CD4-positive, alpha-beta memory T cell (primary cell): ENCODE measurements at regions of chr1 and their contacts with region 1.

Region 1: DNA sequence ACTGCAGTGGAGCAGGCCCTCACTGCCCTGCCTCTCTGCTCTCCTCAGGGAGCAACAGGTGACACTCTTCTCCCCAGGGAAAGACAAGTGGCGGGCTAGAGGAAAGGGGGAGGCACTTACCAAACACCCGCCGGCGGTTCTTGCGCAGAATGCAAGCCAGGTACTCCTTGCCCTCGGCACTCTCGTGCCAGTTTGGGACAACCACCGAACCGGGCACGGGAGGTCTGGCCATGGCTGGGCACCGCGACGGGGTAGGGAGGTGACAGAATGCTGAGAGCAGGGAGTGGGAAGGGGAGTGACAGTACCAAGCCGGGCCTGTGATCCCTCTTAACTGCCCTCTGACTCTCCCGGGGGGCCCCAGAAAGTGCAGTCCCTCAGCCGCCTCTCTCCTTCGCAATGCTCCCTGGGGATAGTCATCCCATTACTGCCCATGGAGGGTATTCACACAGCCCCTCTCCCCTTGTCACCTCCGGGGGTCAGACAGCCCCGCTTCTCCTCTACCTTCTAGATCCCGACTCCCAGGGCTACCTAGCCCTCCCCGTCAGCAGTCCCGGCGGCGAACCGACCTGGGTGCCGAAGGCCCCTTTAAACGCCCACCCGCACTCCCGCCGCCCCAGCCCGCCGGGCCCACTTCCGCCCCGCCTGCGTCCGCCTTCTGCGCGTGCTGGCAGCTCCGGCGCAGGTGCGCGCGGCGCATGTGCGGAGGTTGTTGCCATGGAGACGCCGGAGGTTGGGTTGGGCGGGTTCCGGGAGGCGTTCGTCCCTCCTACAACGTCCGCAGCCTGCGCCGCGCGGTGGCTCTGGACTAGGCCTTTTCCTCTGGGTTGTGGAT is at the start of gene CPLANE2:
- DNase-seq: peak; percentile 93 to 96 (median 94)
- H3K4me3 ChIP-seq: peak within 1 kb of the TSS; percentile 68 to 72
- H3K4me3 Mint-ChIP-seq: peak within 1 kb of the TSS; percentile 83 to 97 (median 91)
- H3K27ac ChIP-seq: peak within 1 kb of the TSS; percentile 82
- H3K27ac Mint-ChIP-seq: peak within 1 kb of the TSS; percentile 94 to 99 (median 97)
- H3K4me1 ChIP-seq: peaks cover 24% of the 10 kb centered on the region
- H3K4me1 Mint-ChIP-seq: peaks cover 12 to 23% (median 18%) of the 10 kb centered on the region in 4 donors
- H3K27me3 ChIP-seq: no peaks in the 10 kb centered on the region
- H3K27me3 Mint-ChIP-seq: no peaks in the 10 kb centered on the region
- total RNA-seq, gene CPLANE2: 11.5 to 13.6 TPM

Region 2: DNA sequence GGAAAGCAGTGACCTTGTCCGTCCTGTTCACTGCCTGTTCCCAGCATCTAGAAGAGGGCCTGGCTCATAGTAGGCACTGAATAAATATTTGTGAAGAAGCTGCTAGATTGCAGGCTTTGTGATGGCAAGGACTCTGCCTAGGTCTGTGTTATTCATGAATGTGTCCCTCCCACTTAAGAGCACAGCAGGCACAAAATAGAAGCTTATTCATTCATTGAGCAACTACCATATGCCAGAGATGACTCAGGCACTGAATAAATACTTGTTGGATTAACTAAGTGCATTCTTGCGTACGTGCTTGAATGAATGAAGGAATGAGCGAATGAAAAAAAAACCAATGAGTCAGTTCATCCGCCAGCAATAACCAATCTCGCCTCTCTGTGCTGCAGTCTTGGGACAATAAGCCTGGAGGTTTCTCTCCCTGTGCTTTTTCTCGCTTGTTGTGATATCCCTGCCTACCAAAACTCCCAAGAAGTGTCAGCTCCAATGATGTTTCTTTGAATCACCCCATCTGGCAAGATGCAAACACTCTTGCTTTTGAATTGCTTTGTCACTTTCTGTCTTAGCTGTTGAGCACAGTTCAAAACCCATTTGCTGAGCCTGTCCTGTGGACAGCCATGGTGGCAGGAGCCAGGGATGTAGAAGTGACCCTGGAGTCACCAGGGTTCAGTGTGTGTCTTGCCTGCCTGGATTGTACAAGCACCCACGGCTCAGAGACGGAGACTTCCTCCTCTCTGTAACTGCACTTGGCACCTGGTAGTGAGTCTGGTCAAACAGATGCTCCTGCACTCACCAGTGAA is 1494.3 kb before region 1 on chr1:
- CTCF ChIA-PET with region 1: no interaction called
- POLR2A ChIA-PET with region 1: no interaction called
- intact Hi-C with region 1: no loop called
- DNase-seq: no peak
- H3K4me3 ChIP-seq: no peak overlapping the region
- H3K4me3 Mint-ChIP-seq: no peak overlapping the region
- H3K27ac ChIP-seq: no peak overlapping the region
- H3K27ac Mint-ChIP-seq: no peak overlapping the region
- H3K4me1 ChIP-seq: no peaks in the 10 kb centered on the region
- H3K4me1 Mint-ChIP-seq: no peaks in the 10 kb centered on the region
- H3K27me3 ChIP-seq: no peaks in the 10 kb centered on the region
- H3K27me3 Mint-ChIP-seq: peaks cover 14 to 27% of the 10 kb centered on the region in 2 donors

Region 3: GRCh38 chr1:16078925-16079656 is 157.6 kb before region 1 on chr1:
- CTCF ChIA-PET with region 1: interaction called, 4 read pairs
- POLR2A ChIA-PET with region 1: interaction called, 3 read pairs
- intact Hi-C with region 1: loop called (anchors 2 kb)
- DNase-seq: peak; percentile 73 to 76 (median 75)
- H3K4me3 ChIP-seq: peak overlapping the region in 1 of 2 donors; percentile 7
- H3K4me3 Mint-ChIP-seq: peak overlapping the region; percentile 76 to 92 (median 84)
- H3K27ac ChIP-seq: no peak overlapping the region
- H3K27ac Mint-ChIP-seq: peak overlapping the region in 6 of 7 donors; percentile 31 to 91 (median 58)
- H3K4me1 ChIP-seq: peaks cover 14% of the 10 kb centered on the region
- H3K4me1 Mint-ChIP-seq: peaks cover 8 to 18% (median 12%) of the 10 kb centered on the region in 4 donors
- H3K27me3 ChIP-seq: peaks cover 3% of the 10 kb centered on the region
- H3K27me3 Mint-ChIP-seq: peaks cover 1 to 4% of the 10 kb centered on the region in 2 donors

Region 4: DNA sequence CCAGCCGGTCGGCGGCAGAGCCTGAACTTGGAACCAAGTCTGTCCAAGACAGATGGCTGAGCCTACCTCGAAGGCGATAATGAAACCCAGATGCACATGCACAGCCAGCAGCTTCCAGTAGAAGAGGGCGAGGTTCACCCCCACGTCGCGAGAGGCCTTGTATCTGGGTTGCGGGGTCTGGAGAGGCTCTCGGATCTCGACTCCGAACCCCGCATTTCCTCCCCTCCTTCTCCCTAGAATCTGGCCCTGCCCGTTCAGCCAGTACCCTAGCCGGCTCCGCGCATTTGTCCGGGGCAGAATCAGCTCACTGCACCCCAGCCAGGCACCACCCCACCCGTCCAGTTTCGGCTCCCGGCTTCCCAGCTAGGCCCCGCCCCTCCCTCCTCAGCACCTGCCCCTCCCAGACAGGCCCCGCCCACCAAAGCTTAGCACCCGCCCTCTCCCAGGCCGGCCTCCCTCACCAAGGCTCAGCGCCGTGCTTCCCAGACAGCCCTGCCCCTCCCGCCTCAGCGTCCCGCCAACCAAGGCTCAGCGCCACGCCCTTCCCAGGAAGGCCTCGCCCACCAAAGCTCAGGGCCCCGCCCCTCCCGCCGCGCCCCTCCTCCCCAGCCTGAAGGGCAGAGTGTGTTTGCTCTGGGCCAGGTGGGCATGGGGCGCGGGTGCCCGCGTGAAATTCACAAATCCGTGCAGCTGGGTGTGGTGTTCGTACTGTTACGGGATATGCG is 19.5 kb before region 1 on chr1:
- CTCF ChIA-PET with region 1: interaction called, 5 read pairs
- POLR2A ChIA-PET with region 1: interaction called, 27 read pairs
- intact Hi-C with region 1: loop called (anchors 1 kb)
- DNase-seq: peak; percentile 88 to 94 (median 90)
- H3K4me3 ChIP-seq: peak overlapping the region; percentile 61 to 72
- H3K4me3 Mint-ChIP-seq: peak overlapping the region; percentile 84 to 91 (median 88)
- H3K27ac ChIP-seq: peak overlapping the region; percentile 30
- H3K27ac Mint-ChIP-seq: peak overlapping the region; percentile 68 to 91 (median 86)
- H3K4me1 ChIP-seq: peaks cover 19% of the 10 kb centered on the region
- H3K4me1 Mint-ChIP-seq: peaks cover 5 to 40% (median 16%) of the 10 kb centered on the region in 4 donors
- H3K27me3 ChIP-seq: no peaks in the 10 kb centered on the region
- H3K27me3 Mint-ChIP-seq: peaks cover 0 to 2% of the 10 kb centered on the region in 2 donors

Region 5: GRCh38 chr1:16276302-16277030 is 39.7 kb after region 1 on chr1:
- CTCF ChIA-PET with region 1: no interaction called
- POLR2A ChIA-PET with region 1: no interaction called
- intact Hi-C with region 1: no loop called
- DNase-seq: no peak
- H3K4me3 ChIP-seq: no peak overlapping the region
- H3K4me3 Mint-ChIP-seq: no peak overlapping the region
- H3K27ac ChIP-seq: no peak overlapping the region
- H3K27ac Mint-ChIP-seq: no peak overlapping the region
- H3K4me1 ChIP-seq: no peaks in the 10 kb centered on the region
- H3K4me1 Mint-ChIP-seq: peaks cover 7 to 18% (median 9%) of the 10 kb centered on the region in 4 donors
- H3K27me3 ChIP-seq: no peaks in the 10 kb centered on the region
- H3K27me3 Mint-ChIP-seq: no peaks in the 10 kb centered on the region